Activated CD4-positive, alpha-beta memory T cell treated with anti-CD3 and anti-CD28 coated beads for 36 hours (primary cell): ENCODE measurements at regions of chr2 and their contacts with region 1.

Region 1: DNA sequence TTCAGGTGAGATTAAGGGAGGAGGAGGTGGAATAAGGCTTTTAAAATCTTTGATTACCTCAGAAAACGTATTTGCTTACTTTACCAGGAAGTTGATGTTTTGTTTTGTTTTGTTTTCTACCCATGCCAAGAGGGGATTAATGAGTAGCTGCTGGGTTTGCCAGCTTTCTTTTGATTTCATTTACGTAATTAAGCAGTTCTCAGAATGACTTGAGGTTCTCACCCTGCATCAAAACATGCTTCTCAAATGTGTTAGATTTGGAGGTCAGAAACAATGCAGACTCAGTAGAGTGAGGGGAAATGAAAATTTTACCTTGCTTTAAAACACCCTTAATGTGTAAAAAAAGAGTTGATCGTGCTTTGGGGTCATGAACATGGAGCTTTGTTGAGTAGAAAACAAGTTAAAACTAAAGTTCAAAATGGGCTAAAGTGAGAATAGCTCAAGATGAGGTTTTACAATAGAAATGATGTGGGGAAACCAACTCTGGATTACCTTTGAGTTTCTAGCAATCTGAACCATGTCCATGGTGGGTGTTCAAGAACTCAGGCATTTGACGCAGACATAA is 217.1 kb upstream of the EPAS1 start:
- DNase-seq: no peak
- H3K4me3 Mint-ChIP-seq: no peak overlapping the region
- H3K27ac Mint-ChIP-seq: peak overlapping the region; percentile 86
- H3K4me1 Mint-ChIP-seq: peaks cover 36% of the 10 kb centered on the region
- H3K27me3 Mint-ChIP-seq: no peaks in the 10 kb centered on the region

Region 2: DNA sequence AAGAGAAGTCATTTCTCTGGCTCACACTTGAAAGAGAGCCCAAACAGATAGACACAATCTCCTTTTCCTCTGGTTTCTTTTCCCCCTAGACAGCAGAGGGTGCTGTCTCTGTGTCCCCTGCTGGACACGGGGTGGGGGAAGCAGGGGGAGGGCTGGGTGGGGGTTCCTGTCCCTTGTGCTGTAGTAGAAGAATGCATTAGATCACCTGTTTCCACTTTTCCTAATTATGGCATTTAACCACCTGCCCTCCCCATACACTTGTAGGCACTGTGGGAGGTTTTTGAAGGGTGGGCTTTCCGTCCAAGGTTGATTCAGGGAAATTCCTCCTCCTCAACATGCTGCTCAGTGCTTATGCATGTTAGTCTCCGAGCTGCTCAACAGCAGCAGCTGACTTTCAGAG is 10.9 kb after region 1 on chr2:
- CTCF ChIA-PET with region 1: interaction called, 3 read pairs
- POLR2A ChIA-PET with region 1: no interaction called
- intact Hi-C with region 1: loop called (anchors 1 kb)
- DNase-seq: no peak
- H3K4me3 Mint-ChIP-seq: no peak overlapping the region
- H3K27ac Mint-ChIP-seq: no peak overlapping the region
- H3K4me1 Mint-ChIP-seq: peaks cover 12% of the 10 kb centered on the region
- H3K27me3 Mint-ChIP-seq: no peaks in the 10 kb centered on the region